Activated B cell treated with CpG ODN at 0.5 μM for 24 hours (primary cell): ENCODE measurements at regions of chr20 and their contacts with region 1.

Region 1: DNA sequence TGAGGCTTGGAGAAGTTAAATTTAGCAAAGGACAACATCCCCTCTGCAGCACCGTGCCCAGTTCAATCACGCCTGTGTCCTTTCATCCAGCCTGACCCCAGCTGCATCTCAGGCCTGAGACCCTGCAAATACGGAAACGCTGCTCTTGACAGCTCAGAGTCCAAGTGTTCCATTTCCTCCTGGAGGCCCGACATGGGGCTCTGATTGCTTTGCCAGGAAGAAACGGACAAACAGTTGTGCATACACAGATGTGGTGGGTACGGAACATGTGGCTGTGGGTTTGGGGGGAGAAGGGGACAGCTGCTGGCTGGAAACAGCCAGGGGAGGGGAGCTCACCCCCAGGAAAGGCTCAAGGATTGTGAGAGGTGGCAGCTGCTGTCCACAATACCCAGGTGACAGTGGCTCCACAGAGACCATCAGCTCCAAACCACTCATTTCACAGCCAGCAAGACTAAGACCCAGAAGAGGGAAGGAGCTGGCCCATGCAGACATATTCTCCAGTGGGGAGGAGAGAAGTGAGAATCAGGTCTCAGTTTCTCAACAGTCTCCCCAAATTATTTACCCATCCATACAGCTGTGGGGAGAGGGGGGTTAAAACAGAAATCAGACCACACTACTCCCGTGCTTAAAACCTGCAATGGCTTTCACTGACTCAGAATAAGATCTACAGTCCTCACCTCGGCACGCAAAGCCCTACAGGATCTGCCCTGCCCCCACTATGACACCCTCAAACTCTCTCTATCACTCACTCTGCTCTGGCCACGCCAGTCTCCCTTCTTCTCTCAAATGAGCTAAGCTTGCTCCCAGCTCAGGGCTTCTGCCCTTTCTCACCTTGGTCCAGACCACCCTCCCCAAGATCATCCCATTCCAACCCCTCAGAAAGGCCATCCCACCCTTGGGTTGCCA is 89.1 kb downstream of the PREX1 start:
- DNase-seq: no peak
- ATAC-seq: peak; percentile 72
- H3K4me3 Mint-ChIP-seq: peak overlapping the region; percentile 45
- H3K27ac Mint-ChIP-seq: peak overlapping the region; percentile 83
- H3K4me1 Mint-ChIP-seq: peaks cover 59% of the 10 kb centered on the region
- H3K27me3 Mint-ChIP-seq: no peaks in the 10 kb centered on the region
- CTCF ChIP-seq: no peak

Region 2: DNA sequence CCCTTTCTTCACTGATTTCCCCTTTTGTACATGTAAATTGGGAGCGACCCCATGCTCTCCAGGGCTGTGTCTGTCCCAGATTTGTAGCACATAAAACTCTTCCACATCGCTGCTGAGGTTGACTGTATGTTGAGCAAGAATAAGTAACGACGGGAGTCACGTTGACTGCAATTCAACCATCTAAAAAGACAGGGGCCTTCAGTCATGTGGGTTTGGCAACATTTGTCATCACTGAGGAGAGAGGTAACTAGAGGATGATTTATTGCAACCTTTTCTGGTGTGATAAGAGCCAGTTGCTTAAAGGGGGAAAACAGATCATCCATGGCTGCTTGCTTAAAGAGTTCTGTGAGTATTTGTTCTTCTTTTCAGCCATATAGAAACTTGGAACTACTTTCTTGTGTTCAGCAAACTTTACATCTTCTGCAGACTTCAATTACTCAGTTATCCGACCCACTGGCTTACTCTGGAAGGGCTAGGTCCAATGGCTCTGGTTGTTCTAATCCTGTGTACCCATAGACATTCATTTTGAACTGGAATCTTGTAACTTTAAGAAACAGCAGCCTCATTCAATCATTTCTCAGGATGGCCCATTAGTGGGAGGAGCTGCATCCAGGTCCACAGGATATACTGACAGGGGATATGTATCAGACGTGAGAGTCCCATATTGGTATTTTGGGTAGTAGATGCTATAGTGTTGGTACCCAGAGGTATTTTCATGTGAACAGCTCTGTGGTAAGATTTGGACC is 793.8 kb before region 1 on chr20:
- CTCF ChIA-PET with region 1: no interaction called
- POLR2A ChIA-PET with region 1: no interaction called
- intact Hi-C with region 1: no loop called
- DNase-seq: no peak
- ATAC-seq: no peak
- H3K4me3 Mint-ChIP-seq: no peak overlapping the region
- H3K27ac Mint-ChIP-seq: no peak overlapping the region
- H3K4me1 Mint-ChIP-seq: peaks cover 2% of the 10 kb centered on the region
- H3K27me3 Mint-ChIP-seq: peaks cover 2% of the 10 kb centered on the region
- CTCF ChIP-seq: no peak

Region 3: DNA sequence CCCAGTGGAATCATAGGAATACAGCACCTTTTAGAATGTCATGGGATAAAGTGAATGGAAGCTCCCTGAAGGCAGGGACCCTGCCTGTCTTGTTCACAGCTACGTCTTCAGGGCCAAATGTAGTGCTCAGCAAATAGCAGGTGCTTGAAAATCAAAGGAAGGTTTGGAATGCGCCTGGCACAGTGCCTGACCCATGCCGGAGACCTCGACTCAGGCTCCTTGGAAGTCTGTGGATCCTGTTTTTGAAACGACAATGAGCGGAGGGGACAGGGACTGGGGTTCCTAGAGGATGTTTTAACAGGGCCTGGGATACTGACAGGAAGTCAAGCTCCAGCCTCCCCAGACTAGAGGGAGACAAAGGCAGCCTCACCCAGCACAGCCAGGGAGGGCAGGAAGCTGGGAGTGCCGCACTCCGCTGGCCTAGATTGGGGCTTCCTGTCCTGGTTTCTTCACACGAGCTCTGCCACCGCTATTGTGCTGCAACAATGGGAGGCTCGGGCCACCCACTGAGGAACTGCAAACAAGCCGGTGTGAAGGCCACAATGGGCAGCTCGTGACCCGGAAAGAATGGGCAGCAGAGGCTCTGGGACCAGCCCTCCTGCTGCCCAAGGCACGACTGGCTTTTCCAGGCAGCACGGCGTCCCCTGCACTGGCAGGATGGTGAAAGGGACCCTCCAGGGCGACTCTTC is 12.4 kb after region 1 on chr20:
- CTCF ChIA-PET with region 1: no interaction called
- POLR2A ChIA-PET with region 1: interaction called, 12 read pairs
- intact Hi-C with region 1: no loop called
- DNase-seq: no peak
- ATAC-seq: peak; percentile 23
- H3K4me3 Mint-ChIP-seq: no peak overlapping the region
- H3K27ac Mint-ChIP-seq: peak overlapping the region; percentile 88
- H3K4me1 Mint-ChIP-seq: peaks cover 84% of the 10 kb centered on the region
- H3K27me3 Mint-ChIP-seq: no peaks in the 10 kb centered on the region
- CTCF ChIP-seq: no peak

Region 4: GRCh38 chr20:48760403-48760983 is 21.8 kb after region 1 on chr20:
- CTCF ChIA-PET with region 1: no interaction called
- POLR2A ChIA-PET with region 1: interaction called, 4 read pairs
- intact Hi-C with region 1: loop called (anchors 2 kb)
- DNase-seq: no peak
- ATAC-seq: peak; percentile 73
- H3K4me3 Mint-ChIP-seq: peak overlapping the region; percentile 75
- H3K27ac Mint-ChIP-seq: peak overlapping the region; percentile 95
- H3K4me1 Mint-ChIP-seq: peaks cover 91% of the 10 kb centered on the region
- H3K27me3 Mint-ChIP-seq: no peaks in the 10 kb centered on the region
- CTCF ChIP-seq: no peak

Region 5: DNA sequence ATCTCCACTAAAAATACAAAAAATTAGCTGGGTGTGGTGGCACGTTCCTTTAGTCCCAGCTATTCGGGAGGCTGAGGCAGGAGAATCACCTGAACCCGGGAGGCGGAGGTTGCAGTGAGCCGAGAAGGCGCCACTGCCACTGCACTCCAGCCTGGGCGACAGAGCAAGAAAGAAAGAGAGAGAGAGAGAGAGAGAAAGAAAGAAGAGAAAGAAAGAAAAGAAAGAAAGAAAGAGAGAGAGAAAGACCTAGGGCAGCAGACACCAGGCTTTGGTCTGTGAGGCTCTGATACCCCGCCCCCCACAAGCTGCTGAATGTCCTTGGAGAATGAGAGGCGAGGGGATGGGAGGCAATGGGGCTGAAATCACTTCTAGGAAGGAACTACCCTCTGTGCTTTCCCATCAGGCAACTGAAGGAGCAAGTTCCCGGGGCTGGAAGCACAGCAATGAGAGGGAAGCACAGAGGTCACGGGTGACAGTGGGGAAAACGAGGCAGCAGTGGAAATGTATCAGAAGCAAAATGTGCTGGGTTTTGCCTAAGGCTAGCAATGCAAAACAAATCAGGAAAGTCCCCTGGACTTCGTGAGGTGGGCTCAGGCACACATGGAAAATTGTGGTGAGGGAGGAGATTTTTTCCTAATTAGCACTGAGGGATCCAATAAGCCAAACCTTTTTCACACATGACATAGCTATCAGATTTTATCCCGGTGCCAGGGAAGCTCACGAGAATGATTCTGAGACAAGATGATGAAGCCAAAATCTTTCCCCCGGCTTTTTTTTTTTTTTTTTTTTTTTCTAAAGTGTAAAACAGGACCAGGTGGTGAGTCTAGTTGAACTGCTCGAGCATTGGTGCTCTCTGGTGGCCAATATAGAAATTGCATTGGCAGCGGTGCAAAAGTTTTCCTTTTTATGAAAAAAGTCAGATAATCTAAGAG is 166.0 kb after region 1 on chr20:
- CTCF ChIA-PET with region 1: interaction called, 12 read pairs
- POLR2A ChIA-PET with region 1: interaction called, 3 read pairs
- intact Hi-C with region 1: no loop called
- DNase-seq: no peak
- ATAC-seq: peak; percentile 83
- H3K4me3 Mint-ChIP-seq: peak overlapping the region; percentile 45
- H3K27ac Mint-ChIP-seq: peak overlapping the region; percentile 30
- H3K4me1 Mint-ChIP-seq: peaks cover 10% of the 10 kb centered on the region
- H3K27me3 Mint-ChIP-seq: no peaks in the 10 kb centered on the region
- CTCF ChIP-seq: no peak